HAP-1 (cell line): ENCODE measurements at regions of chr1 and their contacts with region 1.

Region 1: DNA sequence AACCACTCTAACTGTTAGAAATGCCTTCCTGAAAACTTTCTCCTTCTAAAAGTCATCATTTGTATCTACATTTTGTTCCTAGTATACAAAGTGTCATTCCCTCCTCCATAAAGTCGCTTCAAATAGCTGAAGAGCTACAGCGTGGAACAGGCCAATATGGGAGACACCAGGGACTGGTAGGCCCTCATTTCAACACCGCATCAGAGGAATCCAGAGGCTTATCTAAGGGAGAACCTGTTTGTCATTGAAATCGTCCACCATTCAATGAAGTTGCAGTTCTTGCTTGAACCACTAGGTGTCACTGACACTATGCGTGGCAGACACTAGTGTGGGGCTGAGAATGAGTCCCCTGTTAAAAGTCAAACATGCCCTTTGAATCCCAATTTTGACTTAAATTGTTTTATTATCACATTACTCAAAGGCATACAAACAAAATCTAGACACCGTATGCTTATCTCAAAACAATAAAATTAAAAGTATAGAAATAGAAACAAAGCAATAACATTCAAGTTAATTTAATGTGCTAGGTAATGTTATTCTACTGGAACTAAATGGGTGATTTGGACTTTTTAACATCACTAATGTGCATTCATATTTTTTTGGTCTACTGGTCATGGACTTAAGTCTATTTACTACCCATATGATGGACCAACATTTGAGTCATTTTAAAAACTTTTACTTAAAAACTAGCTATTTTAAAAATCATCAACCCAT is 182.3 kb downstream of the FCRL5 start:
- DNase-seq: peak; percentile 38 to 74
- H3K4me3 ChIP-seq: no peak overlapping the region
- H3K4me1 ChIP-seq: peaks cover 7% of the 10 kb centered on the region; the same call in 1 of the 2 replicates
- H3K27me3 ChIP-seq: 0 out of 2 replicates have a peak, but pooled peaks cover 5% of the 10 kb centered on the region

Region 2: GRCh38 chr1:157193702-157194391 is 176.1 kb before region 1 on chr1:
- in situ Hi-C with region 1: loop called (anchors 10 kb)
- DNase-seq: peak; percentile 68 to 89
- H3K4me3 ChIP-seq: no peak overlapping the region
- H3K4me1 ChIP-seq: no peaks in the 10 kb centered on the region
- H3K27me3 ChIP-seq: peaks cover 8% of the 10 kb centered on the region; the same call in 1 of the 2 replicates